Endothelial cell of umbilical vein (primary cell): ENCODE measurements at regions of chr9 and their contacts with region 1.

Region 1: DNA sequence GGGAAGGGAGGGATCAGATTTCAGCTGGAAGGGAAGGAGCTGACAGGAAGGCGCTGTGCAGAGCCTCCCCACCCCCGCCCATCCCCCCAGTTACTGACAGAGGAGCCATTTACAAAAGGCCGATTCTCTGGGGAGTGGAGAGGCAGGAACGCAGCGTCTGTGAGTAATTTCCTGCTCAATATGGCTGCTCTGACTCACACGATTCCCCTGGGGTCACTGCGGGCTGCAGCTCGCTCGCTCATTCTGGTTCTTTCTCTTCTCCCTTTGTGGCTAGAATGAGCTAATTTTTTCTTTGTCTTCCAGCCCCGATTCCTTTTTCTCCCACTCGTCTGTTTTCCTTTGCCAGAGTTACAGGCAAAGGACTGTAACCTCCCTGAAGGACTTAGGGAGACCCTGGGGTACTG is 28.8 kb downstream of the PTPA start:
- DNase-seq: peak; percentile 98
- H3K4me3 ChIP-seq: peak overlapping the region in 1 of 3 experiments; percentile 31
- H3K27ac ChIP-seq: peak overlapping the region; percentile 99
- H3K4me1 ChIP-seq: peaks cover 55% of the 10 kb centered on the region
- H3K27me3 ChIP-seq: no peaks in the 10 kb centered on the region
- CTCF ChIP-seq: no peak
- POLR2A ChIP-seq: peak; percentile 85

Region 2: DNA sequence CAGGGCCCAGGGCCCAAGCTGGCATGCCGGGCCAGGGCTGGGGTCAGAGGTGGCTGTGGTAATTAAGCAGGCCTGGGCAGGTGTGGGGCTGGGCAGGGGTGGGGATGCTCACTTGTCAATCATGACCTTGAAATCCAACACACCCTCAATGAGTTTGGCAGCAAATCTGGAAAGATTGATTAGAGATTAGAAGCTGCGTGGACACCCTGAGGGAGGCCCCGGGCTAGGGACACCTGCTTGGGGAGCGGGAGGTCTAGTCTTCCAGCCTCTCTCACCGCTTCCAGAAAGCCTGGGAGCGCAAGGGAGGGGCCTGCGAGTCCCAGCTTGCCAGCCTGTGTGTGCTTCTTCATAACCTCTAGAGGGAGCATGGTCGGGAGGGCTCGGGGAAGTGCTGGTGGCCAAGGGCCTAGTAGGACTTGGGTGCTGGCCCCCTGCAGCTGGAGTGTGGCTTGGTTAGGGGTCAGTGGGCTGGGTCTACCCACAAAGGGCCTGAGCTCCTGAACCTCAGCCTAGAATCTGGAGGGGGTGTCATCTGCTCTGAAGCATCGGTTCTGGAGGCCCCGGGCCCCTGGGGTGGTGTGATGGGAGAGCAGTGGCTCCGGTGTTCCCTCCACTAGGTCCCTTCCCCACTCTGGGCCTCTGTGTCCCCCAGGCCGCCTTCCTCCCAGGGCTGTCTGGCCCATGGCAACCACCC is 36.9 kb before region 1 on chr9:
- CTCF ChIA-PET with region 1: no interaction called
- POLR2A ChIA-PET with region 1: no interaction called
- dilution Hi-C with region 1: no loop called
- intact Hi-C with region 1: no loop called
- DNase-seq: peak; percentile 27
- H3K4me3 ChIP-seq: no peak overlapping the region
- H3K27ac ChIP-seq: no peak overlapping the region
- H3K4me1 ChIP-seq: no peaks in the 10 kb centered on the region
- H3K27me3 ChIP-seq: no peaks in the 10 kb centered on the region
- CTCF ChIP-seq: peak; percentile 45 to 68
- POLR2A ChIP-seq: no peak

Region 3: DNA sequence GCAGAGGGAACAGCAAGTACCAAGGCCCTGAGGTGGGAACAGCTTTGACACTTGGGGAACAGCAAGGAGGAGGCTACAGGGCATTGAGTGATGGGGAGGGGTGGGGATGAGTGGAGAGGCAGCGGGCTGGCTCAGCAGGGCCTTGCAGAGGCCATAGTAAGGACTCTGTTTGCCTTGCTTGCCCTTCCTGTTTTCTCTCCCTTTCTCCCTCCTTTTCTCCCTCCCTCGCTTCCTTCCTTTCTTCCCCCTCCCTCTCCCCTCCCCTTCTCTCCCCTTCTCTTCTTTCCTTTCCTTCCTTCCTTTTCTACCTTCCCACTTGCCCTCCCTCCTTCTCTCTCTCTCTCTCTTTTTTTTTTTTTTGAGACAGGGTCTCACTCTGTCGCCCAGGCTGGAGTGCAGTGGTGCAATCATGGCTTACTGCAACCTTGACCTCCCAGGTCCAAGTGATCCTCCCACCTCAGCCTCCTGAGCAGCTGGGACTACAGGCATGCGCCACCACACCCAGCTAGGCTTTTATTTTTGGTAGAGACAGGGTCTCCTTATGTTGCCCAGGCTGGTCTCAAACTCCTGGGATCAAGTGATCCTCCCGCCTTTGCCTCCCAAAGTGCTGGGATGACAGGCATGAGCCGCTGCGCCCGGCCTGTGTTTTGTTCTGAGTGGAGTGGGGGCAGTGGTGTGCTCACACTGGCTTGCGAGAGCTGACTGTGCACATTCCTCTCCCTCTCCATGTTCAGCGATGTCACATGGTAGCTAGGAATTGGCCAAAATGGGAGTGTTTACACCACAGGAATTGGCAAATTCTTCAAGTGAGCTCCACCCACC is 20.9 kb after region 1 on chr9:
- CTCF ChIA-PET with region 1: interaction called, 80 read pairs
- POLR2A ChIA-PET with region 1: interaction called, 4 read pairs
- dilution Hi-C with region 1: no loop called
- intact Hi-C with region 1: no loop called
- DNase-seq: no peak
- H3K4me3 ChIP-seq: no peak overlapping the region
- H3K27ac ChIP-seq: no peak overlapping the region
- H3K4me1 ChIP-seq: no peaks in the 10 kb centered on the region
- H3K27me3 ChIP-seq: no peaks in the 10 kb centered on the region
- CTCF ChIP-seq: no peak
- POLR2A ChIP-seq: no peak

Region 4: GRCh38 chr9:129237195-129237611 is 97.2 kb after region 1 on chr9:
- CTCF ChIA-PET with region 1: no interaction called
- POLR2A ChIA-PET with region 1: no interaction called
- dilution Hi-C with region 1: no loop called
- intact Hi-C with region 1: no loop called
- DNase-seq: peak; percentile 46
- H3K4me3 ChIP-seq: no peak overlapping the region
- H3K27ac ChIP-seq: no peak overlapping the region
- H3K4me1 ChIP-seq: peaks cover 7% of the 10 kb centered on the region
- H3K27me3 ChIP-seq: no peaks in the 10 kb centered on the region
- CTCF ChIP-seq: no peak
- POLR2A ChIP-seq: no peak

Region 5: DNA sequence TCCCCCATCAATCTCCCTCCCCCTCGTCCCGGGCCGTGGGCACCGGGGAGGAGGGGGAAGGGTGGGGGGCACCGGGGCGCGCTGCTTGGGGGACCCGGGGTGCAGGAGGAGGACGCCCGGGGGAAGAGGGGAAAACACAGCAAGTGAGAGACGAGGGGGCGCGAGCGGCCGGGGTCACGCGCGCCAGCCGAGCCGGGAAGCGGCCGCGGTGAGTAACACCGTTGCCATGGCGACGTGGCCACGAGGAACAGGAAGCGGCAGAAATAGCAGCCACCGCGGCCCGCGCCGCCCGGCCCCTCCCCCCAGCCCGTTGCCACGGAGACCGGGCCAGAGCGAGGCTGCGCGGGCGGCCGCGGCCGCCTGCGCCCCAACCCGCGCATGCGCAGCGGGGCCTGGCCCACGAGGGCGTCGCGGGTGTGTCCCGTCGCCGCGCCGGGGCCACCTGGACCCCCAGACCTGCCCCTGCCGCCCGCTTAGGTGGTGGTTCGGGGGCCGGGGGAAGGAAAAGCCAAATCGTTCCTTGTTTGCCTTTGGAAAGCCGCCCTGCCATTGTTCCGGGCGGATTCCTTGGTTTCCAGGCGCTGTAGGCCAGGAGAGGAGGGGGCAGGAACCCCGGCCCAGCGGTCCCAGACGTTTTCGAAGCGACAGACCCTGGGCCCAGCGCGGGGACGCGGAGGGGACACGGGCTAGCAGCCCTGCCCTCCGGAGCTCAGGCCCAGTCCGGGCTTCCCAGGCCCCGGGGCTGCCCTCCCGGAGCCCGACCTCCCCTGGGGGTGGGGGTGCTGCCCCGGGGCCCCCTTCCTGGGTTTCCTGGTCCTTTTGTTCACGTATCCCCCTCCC is 273.8 kb after region 1 on chr9:
- CTCF ChIA-PET with region 1: no interaction called
- POLR2A ChIA-PET with region 1: no interaction called
- dilution Hi-C with region 1: no loop called
- intact Hi-C with region 1: loop called (anchors 1 kb)
- DNase-seq: peak; percentile 95
- H3K4me3 ChIP-seq: peak overlapping the region in 1 of 3 experiments; percentile 35
- H3K27ac ChIP-seq: peak overlapping the region; percentile 96
- H3K4me1 ChIP-seq: peaks cover 15% of the 10 kb centered on the region
- H3K27me3 ChIP-seq: no peaks in the 10 kb centered on the region
- CTCF ChIP-seq: no peak
- POLR2A ChIP-seq: peak; percentile 70

Region 6: DNA sequence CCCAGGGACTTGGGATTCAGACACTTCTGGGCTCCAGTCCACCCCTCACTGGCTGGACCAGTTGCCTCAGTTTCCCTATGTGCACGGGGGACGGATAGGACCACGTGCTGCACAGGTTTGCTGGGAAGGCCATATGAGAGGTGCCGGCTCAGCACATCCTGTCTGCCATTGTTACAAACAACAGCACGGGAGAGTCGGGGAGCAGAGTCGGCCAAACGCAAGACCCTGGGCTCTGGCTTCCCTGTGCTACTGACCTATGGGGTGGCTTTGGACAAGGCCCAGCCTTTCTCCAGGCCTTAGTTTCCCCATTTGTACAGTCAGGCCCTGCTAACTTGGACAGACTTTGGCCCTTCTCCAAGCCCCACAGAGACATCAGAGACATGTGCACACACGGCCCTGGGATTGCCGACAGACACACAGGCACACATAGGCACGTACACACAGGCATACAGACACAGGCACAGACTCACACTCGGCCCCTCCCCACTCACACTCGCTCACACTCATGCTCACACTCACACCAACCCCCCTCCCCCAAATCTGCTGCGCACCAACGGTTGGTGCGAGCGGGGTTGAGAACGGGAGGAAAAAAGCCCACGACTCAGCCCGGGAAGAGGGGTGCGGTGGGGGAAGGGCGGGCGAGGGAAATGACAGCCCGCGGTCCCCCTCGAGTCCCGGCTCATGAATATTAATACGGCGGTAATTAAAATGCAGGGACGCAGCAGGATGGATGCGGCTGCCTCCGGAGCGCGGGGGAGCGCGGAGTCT is 347.8 kb after region 1 on chr9:
- CTCF ChIA-PET with region 1: interaction called, 16 read pairs
- POLR2A ChIA-PET with region 1: no interaction called
- dilution Hi-C with region 1: no loop called
- intact Hi-C with region 1: loop called (anchors 1 kb)
- DNase-seq: peak; percentile 67
- H3K4me3 ChIP-seq: peak overlapping the region in 1 of 3 experiments; percentile 30
- H3K27ac ChIP-seq: peak overlapping the region; percentile 66
- H3K4me1 ChIP-seq: peaks cover 55% of the 10 kb centered on the region
- H3K27me3 ChIP-seq: no peaks in the 10 kb centered on the region
- CTCF ChIP-seq: no peak
- POLR2A ChIP-seq: peak; percentile 58

Region 7: GRCh38 chr9:129602598-129603415 is 462.8 kb after region 1 on chr9:
- CTCF ChIA-PET with region 1: interaction called, 100 read pairs
- POLR2A ChIA-PET with region 1: no interaction called
- dilution Hi-C with region 1: no loop called
- intact Hi-C with region 1: no loop called
- DNase-seq: no peak
- H3K4me3 ChIP-seq: no peak overlapping the region
- H3K27ac ChIP-seq: no peak overlapping the region
- H3K4me1 ChIP-seq: peaks cover 9% of the 10 kb centered on the region
- H3K27me3 ChIP-seq: no peaks in the 10 kb centered on the region
- CTCF ChIP-seq: no peak
- POLR2A ChIP-seq: no peak

Region 8: GRCh38 chr9:129626079-129626624 is 486.2 kb after region 1 on chr9 and contains the start of gene NTMT1:
- CTCF ChIA-PET with region 1: interaction called, 232 read pairs
- POLR2A ChIA-PET with region 1: interaction called, 6 read pairs
- dilution Hi-C with region 1: no loop called
- intact Hi-C with region 1: loop called (anchors 1 kb)
- DNase-seq: peak; percentile 84
- H3K4me3 ChIP-seq: peak within 1 kb of the TSS; percentile 35 to 76 (median 71)
- H3K27ac ChIP-seq: peak within 1 kb of the TSS; percentile 71
- H3K4me1 ChIP-seq: peaks cover 16% of the 10 kb centered on the region
- H3K27me3 ChIP-seq: no peaks in the 10 kb centered on the region
- CTCF ChIP-seq: no peak
- POLR2A ChIP-seq: peak; percentile 93
- total RNA-seq, gene NTMT1: 47.6 and 53.2 TPM in 2 replicates